ENCODE measurements at regions of chr11 and their contacts with region 1.

Region 1: DNA sequence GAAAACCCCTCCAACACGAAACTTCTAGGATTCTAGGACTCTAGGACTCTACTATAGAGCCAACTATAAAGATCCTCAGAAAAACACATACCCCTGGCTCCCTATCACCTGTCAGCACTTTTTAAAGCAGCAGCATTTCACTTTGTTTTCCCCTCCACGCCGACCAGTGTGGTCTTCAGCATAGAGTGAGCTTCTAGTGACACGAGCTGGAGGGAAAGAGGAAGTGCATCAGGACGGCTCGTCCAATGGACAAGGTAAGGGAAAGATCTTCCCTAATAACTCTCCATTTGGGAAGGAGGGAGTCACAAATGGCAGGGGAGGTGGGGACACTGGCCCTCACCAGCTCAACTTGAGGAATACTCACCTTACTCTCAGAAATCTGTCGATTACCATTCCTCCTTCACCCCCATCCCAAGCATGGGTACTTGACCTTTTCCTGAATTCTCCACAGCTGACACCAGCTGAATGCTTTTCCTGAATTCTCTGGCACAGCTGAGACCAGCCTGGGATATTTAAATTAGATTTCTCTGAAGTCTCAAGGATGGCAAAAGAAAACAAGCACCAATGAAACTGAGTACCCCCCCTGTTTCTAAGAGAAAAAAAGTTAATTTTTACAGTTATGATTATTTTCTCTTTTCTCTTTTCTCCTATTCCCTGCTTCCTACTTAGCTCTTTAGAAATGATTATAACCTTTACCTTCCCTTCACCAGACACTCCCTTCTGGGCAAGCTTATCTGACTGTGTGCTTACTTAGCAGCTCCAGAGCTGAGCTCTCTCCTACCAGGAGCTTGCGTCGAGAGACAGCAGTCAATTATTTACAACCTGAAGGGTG is 33.3 kb upstream of the NNMT start:
- DNase-seq: peak; percentile 49 to 67
- H3K4me3 ChIP-seq: no peak overlapping the region
- H3K4me1 ChIP-seq: no peaks in the 10 kb centered on the region
- H3K27me3 ChIP-seq: peaks cover 10% of the 10 kb centered on the region

Region 2: DNA sequence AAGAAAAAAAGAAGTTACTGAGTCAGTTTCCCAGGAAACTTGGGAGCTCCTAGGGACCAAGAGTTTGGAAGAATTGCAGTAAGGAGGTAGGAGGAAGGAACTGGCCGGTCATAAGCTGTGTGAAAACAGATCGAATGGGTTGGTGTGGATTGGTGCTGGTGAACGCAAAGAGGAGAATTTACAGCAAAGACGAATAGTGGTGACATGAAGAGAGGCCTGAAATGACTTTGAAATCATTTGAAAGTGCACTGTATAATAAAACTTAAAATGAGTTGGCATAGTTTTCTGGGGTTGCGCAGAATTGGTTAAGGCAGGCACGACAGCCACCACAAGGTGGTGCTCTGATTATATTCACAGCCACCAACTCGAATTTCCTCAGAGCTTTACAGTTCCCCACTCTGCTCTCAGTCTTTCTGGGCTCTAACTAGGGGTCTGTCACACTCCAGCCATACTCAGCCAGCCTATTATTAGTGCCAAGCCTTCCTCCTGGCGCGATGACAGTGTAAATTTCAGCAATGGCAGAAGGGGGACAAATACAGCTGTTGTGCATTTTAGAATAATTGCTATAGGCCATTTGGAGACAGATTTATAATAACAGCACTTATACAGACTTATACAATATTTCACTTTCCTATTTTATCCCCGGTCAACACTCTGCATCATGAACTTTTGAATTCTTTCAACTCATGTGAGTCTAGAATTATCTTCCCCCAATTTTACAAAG is 366.6 kb before region 1 on chr11:
- in situ Hi-C with region 1: loop called (anchors 5 kb)
- DNase-seq: peak; percentile 55
- H3K4me3 ChIP-seq: no peak overlapping the region
- H3K4me1 ChIP-seq: peaks cover 13% of the 10 kb centered on the region
- H3K27me3 ChIP-seq: no peaks in the 10 kb centered on the region

Region 3: GRCh38 chr11:113994077-113994954 is 268.6 kb before region 1 on chr11:
- in situ Hi-C with region 1: loop called (anchors 5 kb)
- DNase-seq: peak in 1 of 2 experiments; percentile 58
- H3K4me3 ChIP-seq: no peak overlapping the region
- H3K4me1 ChIP-seq: peaks cover 8% of the 10 kb centered on the region
- H3K27me3 ChIP-seq: no peaks in the 10 kb centered on the region; the same call in 1 of the 2 replicates

Region 4: DNA sequence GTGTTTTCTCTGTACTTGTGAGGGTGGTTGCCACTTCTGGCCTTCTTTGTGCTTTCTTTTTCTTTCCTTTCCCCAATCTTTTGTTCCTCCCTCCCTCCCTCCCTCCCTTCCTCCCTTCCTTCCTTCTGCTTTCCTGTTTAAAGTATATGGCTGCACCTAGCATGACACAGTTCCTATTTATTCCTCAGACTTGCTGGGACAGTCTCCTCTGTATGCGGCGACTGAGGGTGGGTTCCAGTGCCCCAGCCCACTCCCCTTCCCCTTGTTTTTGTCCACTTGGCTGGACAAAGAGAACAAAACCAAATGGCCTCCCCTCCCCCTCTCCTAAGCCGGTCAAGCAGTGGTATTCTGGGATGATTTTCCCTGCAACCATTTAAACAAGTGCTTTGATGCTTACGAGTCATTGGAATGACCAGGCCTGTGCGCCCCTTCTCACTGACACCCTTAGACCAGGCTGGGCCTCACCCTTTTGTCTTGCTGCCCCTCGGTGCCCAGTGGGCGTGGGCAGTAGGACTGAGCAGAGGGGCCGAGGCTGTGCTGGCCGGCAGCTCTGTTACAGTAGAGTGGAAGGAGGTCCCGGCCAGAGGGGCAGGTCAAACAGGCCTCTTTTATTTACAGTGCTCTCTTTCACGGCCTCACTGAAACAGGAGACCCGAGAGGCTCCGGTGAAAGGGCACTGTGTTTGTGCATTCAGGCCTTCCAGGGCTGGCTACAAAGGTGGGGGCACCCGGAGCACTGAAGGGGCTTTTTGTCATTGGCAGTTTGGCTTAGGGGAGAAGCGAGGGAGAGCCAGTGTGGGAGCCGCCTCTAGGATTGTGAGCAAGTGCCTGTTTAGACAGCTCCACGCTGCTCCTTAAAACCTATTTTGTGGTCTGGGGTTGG is 171.1 kb before region 1 on chr11:
- in situ Hi-C with region 1: no loop called
- DNase-seq: no peak
- H3K4me3 ChIP-seq: no peak overlapping the region
- H3K4me1 ChIP-seq: peaks cover 4% of the 10 kb centered on the region; the same call in 1 of the 2 replicates
- H3K27me3 ChIP-seq: peaks cover 4% of the 10 kb centered on the region; the same call in 1 of the 2 replicates